CD8-positive, alpha-beta T cell (primary cell): ENCODE measurements at regions of chr5 and their contacts with region 1.

Region 1: GRCh38 chr5:71569748-71570509 is 17.2 kb upstream of the MCCC2 start:
- DNase-seq: no peak
- ATAC-seq: no peak
- H3K4me3 ChIP-seq: no peak overlapping the region
- H3K4me3 Mint-ChIP-seq: no peak overlapping the region
- H3K27ac ChIP-seq: no peak overlapping the region
- H3K27ac Mint-ChIP-seq: no peak overlapping the region
- H3K4me1 ChIP-seq: no peaks in the 10 kb centered on the region
- H3K4me1 Mint-ChIP-seq: no peaks in the 10 kb centered on the region
- H3K27me3 ChIP-seq: no peaks in the 10 kb centered on the region
- H3K27me3 Mint-ChIP-seq: no peaks in the 10 kb centered on the region
- CTCF ChIP-seq: no peak

Region 2: DNA sequence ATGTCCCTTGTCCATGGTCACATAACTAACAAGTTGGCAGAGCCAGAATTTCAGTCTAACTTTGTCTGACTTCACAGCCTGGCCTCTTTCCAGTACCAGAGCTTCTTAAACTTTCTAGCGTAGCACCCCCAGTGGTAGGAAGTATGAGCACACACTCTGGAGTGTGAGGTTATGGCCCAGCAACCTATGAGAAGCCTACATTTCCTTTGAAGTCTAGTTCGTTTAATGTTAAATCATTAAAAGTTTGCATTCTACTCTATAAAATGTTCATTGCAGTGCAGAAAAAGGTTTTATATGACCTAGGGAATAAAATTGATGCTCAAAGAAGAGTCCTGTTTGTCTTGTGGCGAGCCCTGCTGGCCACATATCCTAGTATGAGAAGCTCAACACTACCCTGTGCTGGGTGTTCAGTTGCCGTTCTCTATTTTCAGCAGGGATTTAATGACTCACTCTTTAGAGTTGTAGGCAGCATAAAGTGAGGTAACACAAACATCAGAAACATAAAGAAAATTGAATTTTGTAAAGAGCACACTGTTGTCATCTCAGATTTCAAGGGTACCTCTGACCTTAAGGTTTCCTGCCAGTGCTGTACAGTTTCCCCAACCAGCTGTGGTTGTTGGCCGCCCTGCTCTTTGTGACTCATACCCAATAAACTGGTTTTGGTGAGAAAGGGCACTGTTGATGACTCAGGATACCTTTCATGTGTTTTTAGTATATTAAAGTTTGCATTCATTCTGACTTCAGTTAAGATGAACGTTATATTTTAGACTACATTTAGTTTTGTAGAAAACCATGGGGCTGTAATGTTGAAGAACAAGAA is 31.5 kb after region 1 on chr5:
- CTCF ChIA-PET with region 1: interaction called, 3 read pairs
- POLR2A ChIA-PET with region 1: no interaction called
- intact Hi-C with region 1: loop called in 1 of 2 experiments (anchors 5 kb)
- DNase-seq: peak; percentile 25 to 85 (median 74)
- ATAC-seq: peak; percentile 85
- H3K4me3 ChIP-seq: no peak overlapping the region
- H3K4me3 Mint-ChIP-seq: no peak overlapping the region
- H3K27ac ChIP-seq: peak overlapping the region; percentile 14 to 73
- H3K27ac Mint-ChIP-seq: peak overlapping the region; percentile 86
- H3K4me1 ChIP-seq: peaks cover 17% of the 10 kb centered on the region
- H3K4me1 Mint-ChIP-seq: peaks cover 26% of the 10 kb centered on the region
- H3K27me3 ChIP-seq: no peaks in the 10 kb centered on the region
- H3K27me3 Mint-ChIP-seq: no peaks in the 10 kb centered on the region
- CTCF ChIP-seq: peak; percentile 72

Region 3: DNA sequence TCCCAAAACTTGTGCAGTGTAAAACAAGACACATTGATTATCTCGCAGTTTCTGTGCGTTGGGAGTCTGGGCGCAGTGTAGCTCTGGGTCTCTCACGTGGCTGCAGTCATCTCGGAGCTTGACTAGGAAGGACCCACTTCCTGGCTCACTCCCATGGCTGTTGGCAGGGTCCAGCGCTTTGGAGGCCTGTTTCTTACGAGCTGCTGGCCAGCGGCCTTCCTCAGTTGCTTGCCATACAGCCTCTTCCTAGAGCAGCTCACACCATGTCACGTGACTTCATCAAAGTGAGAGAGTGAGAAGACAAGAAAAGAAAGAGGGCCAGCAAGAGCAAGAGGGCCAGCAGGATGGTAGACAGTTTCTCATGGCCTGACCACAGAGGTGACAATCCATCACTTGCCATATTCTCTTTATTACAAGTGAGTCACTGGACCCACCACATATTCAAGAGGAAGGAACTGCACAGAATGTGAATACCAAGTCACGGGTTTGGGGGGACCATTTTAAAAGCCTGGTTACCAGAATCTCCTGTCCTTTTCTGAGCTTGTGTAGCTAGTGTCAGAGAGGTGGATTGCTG is 53.4 kb after region 1 on chr5:
- CTCF ChIA-PET with region 1: no interaction called
- POLR2A ChIA-PET with region 1: no interaction called
- intact Hi-C with region 1: loop called in 1 of 2 experiments (anchors 10 kb)
- DNase-seq: peak in 1 of 9 experiments; percentile 4
- ATAC-seq: no peak
- H3K4me3 ChIP-seq: no peak overlapping the region
- H3K4me3 Mint-ChIP-seq: no peak overlapping the region
- H3K27ac ChIP-seq: no peak overlapping the region
- H3K27ac Mint-ChIP-seq: no peak overlapping the region
- H3K4me1 ChIP-seq: no peaks in the 10 kb centered on the region
- H3K4me1 Mint-ChIP-seq: peaks cover 13% of the 10 kb centered on the region
- H3K27me3 ChIP-seq: no peaks in the 10 kb centered on the region
- H3K27me3 Mint-ChIP-seq: no peaks in the 10 kb centered on the region
- CTCF ChIP-seq: no peak

Region 4: DNA sequence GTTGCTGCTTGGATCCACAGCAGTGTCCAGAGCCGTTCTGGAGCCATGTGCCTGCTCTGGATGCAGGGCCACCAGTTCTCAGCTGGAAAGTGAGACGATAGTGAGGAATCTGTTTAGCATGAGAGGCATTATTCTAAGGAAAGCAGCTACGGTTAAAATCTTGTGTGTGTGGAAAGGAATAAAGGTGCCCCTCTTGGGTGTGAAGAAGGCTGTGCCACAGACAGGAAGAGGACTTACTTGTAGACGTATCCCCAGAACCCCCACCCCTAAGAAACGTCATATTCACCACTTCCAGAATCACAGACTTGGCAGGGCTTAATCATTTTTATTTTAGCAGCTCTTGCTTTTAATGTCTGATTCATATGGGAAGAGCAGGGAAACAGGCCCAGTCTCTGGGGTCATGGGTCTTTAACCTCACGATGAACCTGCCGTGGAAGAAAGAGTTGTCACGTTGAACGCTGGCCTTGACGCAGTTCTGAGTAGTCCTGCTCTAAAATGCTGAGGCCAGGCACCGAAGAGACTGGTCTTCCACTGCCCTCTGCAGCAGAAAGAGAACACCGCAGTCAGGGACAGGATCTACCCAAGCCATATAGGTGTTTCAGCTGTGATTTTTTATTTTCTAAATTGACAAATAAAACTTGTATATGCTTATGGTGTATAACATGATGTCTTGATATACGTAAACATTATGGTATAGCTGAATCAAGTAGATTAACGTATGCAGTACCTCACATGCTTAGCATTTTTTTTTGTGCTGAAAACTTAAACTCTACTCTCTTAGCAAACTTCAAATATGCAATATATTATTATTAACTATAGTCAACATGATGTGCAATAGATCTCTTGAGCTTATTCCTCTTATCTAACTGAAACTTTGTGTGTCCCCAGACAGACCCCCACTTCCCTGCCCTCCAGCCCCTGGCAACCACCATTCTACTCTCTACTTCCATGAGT is 187.9 kb after region 1 on chr5:
- CTCF ChIA-PET with region 1: no interaction called
- POLR2A ChIA-PET with region 1: no interaction called
- intact Hi-C with region 1: loop called in 1 of 2 experiments (anchors 10 kb)
- DNase-seq: peak in 7 of 9 experiments; percentile 21 to 66 (median 39)
- ATAC-seq: peak; percentile 78
- H3K4me3 ChIP-seq: peak overlapping the region in 1 of 2 experiments; percentile 16
- H3K4me3 Mint-ChIP-seq: peak overlapping the region; percentile 49
- H3K27ac ChIP-seq: no peak overlapping the region
- H3K27ac Mint-ChIP-seq: peak overlapping the region; percentile 39
- H3K4me1 ChIP-seq: peaks cover 4% of the 10 kb centered on the region
- H3K4me1 Mint-ChIP-seq: peaks cover 9% of the 10 kb centered on the region
- H3K27me3 ChIP-seq: no peaks in the 10 kb centered on the region
- H3K27me3 Mint-ChIP-seq: peaks cover 2% of the 10 kb centered on the region
- CTCF ChIP-seq: no peak